Activated T-helper 2 cell treated with anti-CD3 and anti-CD28 coated beads, Interferon-gamma antibody, Interleukin-2, Interleukin-4, amounts not matched to agents 10 μg/mL and 5 μg/mL and 100 μg/mL, durations not matched to agents 14 hours and 24 hours and 36 hours (primary cell): ENCODE measurements at regions of chr1 and their contacts with region 1.

Region 1: GRCh38 chr1:105664495-105664894 is 1392.0 kb upstream of the PRMT6 start:
- DNase-seq: no peak
- H3K4me3 Mint-ChIP-seq: no peak overlapping the region
- H3K27ac Mint-ChIP-seq: no peak overlapping the region
- H3K4me1 Mint-ChIP-seq: no peaks in the 10 kb centered on the region
- H3K27me3 Mint-ChIP-seq: no peaks in the 10 kb centered on the region

Region 2: GRCh38 chr1:104706631-104707147 is 957.8 kb before region 1 on chr1:
- intact Hi-C with region 1: loop called (anchors 10 kb)
- DNase-seq: no peak
- H3K4me3 Mint-ChIP-seq: no peak overlapping the region
- H3K27ac Mint-ChIP-seq: no peak overlapping the region
- H3K4me1 Mint-ChIP-seq: no peaks in the 10 kb centered on the region
- H3K27me3 Mint-ChIP-seq: no peaks in the 10 kb centered on the region